ENCODE measurements at regions of chr3 and their contacts with region 1.

Region 1: DNA sequence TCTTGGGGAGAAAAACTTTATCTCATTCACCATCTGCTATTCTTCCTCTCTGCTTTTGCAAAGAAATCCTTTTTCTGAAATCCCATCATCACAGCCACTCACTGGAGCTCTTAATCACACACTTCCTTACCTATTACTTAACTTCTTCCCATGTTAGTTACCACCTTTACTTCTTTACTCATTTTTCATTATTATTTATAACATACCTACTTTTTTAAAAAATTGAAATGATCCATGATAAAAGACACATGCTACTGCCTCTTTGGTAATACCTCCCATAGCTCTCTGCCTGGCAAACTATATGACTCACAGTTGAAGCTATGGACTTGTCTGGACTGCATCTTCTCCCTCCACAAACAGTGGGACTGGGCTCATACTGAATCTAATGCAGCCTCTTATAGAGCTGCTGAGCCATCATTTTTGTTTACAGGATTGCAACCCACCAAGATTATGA is 150.3 kb downstream of the TNIK start:
- DNase-seq: no peak
- H3K4me3 ChIP-seq: no peak overlapping the region
- H3K27me3 ChIP-seq: no peaks in the 10 kb centered on the region
- CTCF ChIP-seq: no peak

Region 2: GRCh38 chr3:171088964-171089754 is 220.8 kb before region 1 on chr3:
- CTCF ChIA-PET with region 1: no interaction called
- POLR2A ChIA-PET with region 1: no interaction called
- DNase-seq: peak; percentile 50
- H3K4me3 ChIP-seq: no peak overlapping the region
- H3K27me3 ChIP-seq: no peaks in the 10 kb centered on the region
- CTCF ChIP-seq: no peak

Region 3: GRCh38 chr3:171181907-171182690 is 127.8 kb before region 1 on chr3:
- CTCF ChIA-PET with region 1: no interaction called
- POLR2A ChIA-PET with region 1: interaction called, 20 read pairs
- DNase-seq: no peak
- H3K4me3 ChIP-seq: no peak overlapping the region
- H3K27me3 ChIP-seq: no peaks in the 10 kb centered on the region
- CTCF ChIP-seq: no peak

Measured in BJ (cell line).